Pancreas (tissue), 10 donors: ENCODE measurements at regions of chr12 and their contacts with region 1.

Region 1: GRCh38 chr12:39990122-39991101 is 115.5 kb downstream of the SLC2A13 start:
- DNase-seq: peak; percentile 18 to 79 (median 43)
- ATAC-seq: peak; percentile 66 to 96 (median 92)
- H3K4me3 ChIP-seq: no peak overlapping the region
- H3K27ac ChIP-seq: no peak overlapping the region
- H3K4me1 ChIP-seq: no peaks in the 10 kb centered on the region
- H3K27me3 ChIP-seq: no peaks in the 10 kb centered on the region
- CTCF ChIP-seq: peak; percentile 59 to 82 (median 73)

Region 2: GRCh38 chr12:39772708-39773665 is 217.4 kb before region 1 on chr12:
- intact Hi-C with region 1: loop called in 2 of 3 experiments (anchors 10 kb)
- DNase-seq: no peak
- ATAC-seq: no peak
- H3K4me3 ChIP-seq: no peak overlapping the region
- H3K27ac ChIP-seq: no peak overlapping the region
- H3K4me1 ChIP-seq: no peaks in the 10 kb centered on the region
- H3K27me3 ChIP-seq: no peaks in the 10 kb centered on the region
- CTCF ChIP-seq: no peak

Region 3: GRCh38 chr12:40351976-40352375 is 361.6 kb after region 1 on chr12:
- intact Hi-C with region 1: no loop called
- DNase-seq: no peak
- ATAC-seq: peak in 2 of 4 donors; percentile 15 to 38
- H3K4me3 ChIP-seq: no peak overlapping the region
- H3K27ac ChIP-seq: no peak overlapping the region
- H3K4me1 ChIP-seq: no peaks in the 10 kb centered on the region
- H3K27me3 ChIP-seq: no peaks in the 10 kb centered on the region
- CTCF ChIP-seq: no peak